Tibial artery (tissue), 4 donors: ENCODE measurements at regions of chr15 and their contacts with region 1.

Region 1: DNA sequence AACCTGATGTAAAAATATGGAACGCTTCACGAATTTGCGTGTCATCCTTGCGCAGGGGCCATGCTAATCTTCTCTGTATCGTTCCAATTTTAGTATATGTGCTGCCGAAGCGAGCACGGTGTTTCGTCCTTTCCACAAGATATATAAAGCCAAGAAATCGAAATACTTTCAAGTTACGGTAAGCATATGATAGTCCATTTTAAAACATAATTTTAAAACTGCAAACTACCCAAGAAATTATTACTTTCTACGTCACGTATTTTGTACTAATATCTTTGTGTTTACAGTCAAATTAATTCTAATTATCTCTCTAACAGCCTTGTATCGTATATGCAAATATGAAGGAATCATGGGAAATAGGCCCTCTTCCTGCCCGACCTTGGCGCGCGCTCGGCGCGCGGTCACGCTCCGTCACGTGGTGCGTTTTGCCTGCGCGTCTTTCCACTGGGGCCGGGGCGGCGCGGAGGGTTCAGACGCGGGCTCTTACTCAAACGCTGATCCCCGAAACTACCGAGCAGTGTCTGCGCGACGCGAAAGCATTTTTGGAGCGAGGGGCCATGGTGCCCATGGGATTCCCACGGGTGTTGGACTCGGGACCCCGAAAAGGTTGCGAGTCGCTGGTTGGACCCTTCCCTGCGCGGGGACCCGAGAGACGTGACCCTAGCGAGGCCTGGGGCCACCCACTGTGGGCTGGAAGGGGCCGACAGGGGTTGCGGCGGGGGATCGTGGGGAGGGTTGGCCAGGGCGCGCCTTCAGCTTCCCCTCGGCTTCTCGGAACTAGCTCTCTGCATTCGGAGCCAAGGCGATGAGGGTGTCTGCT is at the start of gene RNU6-1:
- DNase-seq: peak; percentile 94 to 97
- H3K4me3 ChIP-seq: peak within 1 kb of the TSS; percentile 89 to 98
- H3K27ac ChIP-seq: peak within 1 kb of the TSS; percentile 94 to 98
- H3K4me1 ChIP-seq: peaks cover 0 to 36% (median 23%) of the 10 kb centered on the region in 4 donors
- H3K27me3 ChIP-seq: peaks cover 0 to 8% of the 10 kb centered on the region in 2 donors
- CTCF ChIP-seq: no peak

Region 2: GRCh38 chr15:67456677-67457529 is 383.2 kb before region 1 on chr15:
- intact Hi-C with region 1: loop called (anchors 2 kb)
- DNase-seq: peak; percentile 78 to 80
- H3K4me3 ChIP-seq: no peak overlapping the region
- H3K27ac ChIP-seq: no peak overlapping the region
- H3K4me1 ChIP-seq: peaks cover 0 to 8% (median 2%) of the 10 kb centered on the region in 4 donors
- H3K27me3 ChIP-seq: no peaks in the 10 kb centered on the region
- CTCF ChIP-seq: peak; percentile 81 to 84

Region 3: DNA sequence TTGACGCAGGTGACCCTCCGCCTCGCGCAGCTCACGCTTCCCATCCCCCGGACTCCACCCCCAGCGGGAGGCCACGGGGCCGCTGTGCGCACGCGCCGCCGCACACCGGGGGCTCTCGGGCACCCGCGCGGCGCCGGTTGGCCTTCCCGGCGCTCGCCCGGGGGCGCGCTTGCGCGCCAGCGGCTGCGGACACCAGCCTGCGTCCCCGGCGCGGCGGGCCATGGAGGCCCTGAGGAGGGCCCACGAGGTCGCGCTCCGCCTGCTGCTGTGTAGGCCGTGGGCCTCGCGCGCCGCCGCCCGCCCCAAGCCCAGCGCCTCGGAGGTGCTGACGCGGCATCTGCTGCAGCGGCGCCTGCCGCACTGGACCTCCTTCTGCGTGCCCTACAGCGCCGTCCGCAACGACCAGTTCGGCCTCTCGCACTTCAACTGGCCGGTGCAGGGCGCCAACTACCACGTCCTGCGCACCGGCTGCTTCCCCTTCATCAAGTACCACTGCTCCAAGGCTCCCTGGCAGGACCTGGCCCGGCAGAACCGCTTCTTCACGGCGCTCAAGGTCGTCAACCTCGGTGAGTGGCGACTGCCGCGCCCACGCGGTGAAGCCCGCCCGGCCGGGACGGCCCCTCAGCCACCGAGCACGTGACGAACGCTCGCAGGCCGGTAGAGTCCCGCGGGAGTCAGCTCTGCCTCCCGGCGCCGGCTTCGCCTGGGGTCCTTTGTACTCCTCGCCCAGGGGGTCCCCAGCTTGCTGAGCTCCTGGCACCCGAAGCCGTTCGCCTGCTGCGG is 318.9 kb before region 1 on chr15 and contains the start of gene C15orf61:
- intact Hi-C with region 1: loop called (anchors 5 kb)
- DNase-seq: peak; percentile 79 to 93
- H3K4me3 ChIP-seq: peak within 1 kb of the TSS; percentile 86 to 87
- H3K27ac ChIP-seq: peak within 1 kb of the TSS; percentile 96
- H3K4me1 ChIP-seq: peaks cover 0 to 34% (median 17%) of the 10 kb centered on the region in 4 donors
- H3K27me3 ChIP-seq: no peaks in the 10 kb centered on the region
- CTCF ChIP-seq: no peak

Region 4: DNA sequence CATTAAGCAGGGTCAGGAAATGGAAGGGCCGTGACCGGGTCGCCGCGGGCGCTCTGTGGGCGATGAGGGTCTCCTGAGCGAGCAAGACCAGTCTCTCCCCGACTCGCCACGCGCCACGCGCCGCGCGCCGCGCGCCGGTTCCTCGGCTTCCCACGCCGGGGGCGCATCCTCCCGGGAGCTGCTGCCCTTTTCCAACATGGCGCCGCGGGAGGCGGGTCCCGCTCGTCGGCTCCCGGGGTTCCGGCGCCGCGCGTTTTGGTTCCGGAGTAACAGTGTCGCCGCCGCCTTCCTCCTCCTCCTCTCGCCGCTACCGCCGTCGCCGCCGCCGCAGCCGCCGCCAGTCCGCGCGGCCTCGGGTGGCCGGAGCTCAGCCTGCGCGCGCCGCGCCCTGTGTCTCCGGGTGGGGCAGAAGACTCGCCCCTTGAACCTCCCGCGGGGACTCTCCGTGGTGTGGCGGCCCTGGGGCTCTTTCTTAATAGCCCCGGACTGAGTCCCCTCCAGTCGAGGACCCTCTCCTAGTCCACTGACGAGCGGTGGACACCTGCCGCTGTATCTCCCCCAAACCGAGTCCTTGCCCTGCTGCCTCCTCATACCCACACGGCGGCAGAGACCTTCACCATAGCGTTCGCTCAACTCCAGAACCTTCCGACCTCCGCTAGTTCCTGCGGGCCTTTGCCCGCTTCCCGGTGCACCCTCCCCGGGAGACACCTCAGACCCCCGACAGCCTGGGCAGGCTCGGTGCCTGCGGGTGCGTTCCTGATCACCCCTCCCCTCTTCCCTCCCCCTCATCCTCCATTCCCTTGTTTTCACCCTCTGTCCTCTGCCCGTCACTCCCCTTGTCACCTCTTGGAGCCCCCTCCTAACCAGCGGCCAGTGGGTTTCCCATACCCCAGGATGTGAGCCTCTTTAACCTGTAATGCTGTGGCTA is 297.5 kb before region 1 on chr15 and contains the start of gene MAP2K5:
- intact Hi-C with region 1: loop called (anchors 10 kb)
- DNase-seq: peak; percentile 85 to 93
- H3K4me3 ChIP-seq: peak within 1 kb of the TSS; percentile 58 to 71
- H3K27ac ChIP-seq: peak within 1 kb of the TSS; percentile 77 to 83
- H3K4me1 ChIP-seq: peaks cover 0 to 24% (median 14%) of the 10 kb centered on the region in 4 donors
- H3K27me3 ChIP-seq: no peaks in the 10 kb centered on the region
- CTCF ChIP-seq: no peak